Right cardiac atrium (tissue), 5 donors: ENCODE measurements at regions of chr1 and their contacts with region 1.

Region 1: GRCh38 chr1:85109475-85109874 is 61.2 kb upstream of the MCOLN3 start:
- DNase-seq: peak; percentile 47 to 76 (median 74)
- ATAC-seq: peak; percentile 92
- H3K4me3 ChIP-seq: no peak overlapping the region
- H3K27ac ChIP-seq: no peak overlapping the region
- H3K4me1 ChIP-seq: no peaks in the 10 kb centered on the region
- H3K27me3 ChIP-seq: no peaks in the 10 kb centered on the region

Region 2: DNA sequence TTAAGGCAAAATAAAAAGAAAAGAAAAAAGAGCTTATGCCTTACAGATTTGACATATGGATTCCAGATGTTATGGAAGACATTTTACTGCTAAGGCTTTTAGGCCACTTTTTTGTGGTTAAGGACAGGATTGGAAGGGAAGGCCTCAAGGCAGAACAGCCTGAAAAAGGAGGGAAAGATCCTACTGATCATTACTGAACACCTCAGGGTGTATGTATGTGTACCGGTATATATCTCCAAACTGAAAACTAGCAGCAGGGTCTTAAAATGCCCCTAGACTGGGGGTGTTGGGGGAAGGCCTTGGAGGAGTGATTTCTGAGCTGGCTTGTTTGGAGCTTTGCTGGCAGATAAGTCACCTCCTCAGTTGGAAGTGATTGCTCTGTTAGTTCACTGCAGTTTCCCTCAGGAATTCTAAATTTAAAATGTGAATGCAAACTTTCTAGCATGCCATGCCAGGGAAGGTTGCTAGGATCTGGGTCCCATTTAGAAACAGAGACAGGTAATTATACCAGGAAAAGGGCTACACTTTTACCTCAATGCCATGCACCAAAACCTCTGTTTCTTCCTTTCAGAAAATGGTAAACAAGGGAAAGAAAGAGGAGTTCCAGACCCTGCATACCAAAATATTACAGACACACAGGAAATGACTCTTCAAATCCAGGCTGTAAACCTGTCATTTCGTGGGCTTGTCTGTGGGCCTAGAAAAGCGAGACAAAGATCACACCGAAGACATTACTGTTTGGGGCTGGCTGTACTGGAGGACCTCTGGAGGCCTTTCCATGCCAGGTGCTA is 135.0 kb after region 1 on chr1:
- intact Hi-C with region 1: loop called in 1 of 4 experiments (anchors 5 kb)
- DNase-seq: no peak
- ATAC-seq: no peak
- H3K4me3 ChIP-seq: no peak overlapping the region
- H3K27ac ChIP-seq: no peak overlapping the region
- H3K4me1 ChIP-seq: no peaks in the 10 kb centered on the region
- H3K27me3 ChIP-seq: no peaks in the 10 kb centered on the region

Region 3: DNA sequence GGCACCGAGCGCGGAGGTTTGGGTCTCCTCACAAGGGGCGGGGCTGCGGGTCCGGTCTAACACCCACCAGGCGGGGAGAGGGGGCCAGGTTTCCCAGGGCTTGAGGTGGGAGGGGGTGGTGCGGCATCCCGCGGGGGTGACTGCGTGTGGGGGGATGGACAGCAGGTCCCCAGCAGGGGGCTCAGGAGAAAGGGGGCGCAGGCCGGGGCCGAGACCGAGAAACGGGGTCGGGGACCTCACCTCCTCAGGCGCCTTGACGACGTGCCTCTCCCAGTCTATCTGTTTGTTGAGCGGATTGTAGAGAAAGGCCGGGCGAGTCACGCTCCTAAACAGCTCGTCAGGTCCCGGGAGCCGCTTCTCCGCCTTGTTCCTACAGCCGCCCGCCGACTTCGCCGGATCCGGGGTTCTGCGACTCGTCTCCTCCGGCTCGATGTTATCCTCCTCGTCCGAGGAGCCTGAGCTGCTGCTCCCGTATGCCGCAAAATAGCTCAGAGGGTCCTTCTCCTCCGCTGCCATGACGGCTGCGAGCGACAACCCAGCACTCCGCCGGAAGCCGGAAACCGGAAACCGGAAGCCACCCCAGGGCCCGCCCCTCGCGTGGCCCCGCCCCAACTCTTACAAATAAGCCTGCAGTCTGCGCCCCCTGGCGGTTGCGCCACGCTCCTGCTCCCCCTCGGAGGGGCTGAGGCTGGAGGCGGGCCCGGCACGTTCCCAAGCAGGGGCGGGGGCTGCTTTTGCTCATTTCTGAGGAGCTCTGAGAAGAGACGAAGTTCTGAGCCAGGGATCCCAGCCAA is 149.8 kb after region 1 on chr1 and contains the start of gene C1orf52:
- intact Hi-C with region 1: loop called in 3 of 4 experiments (anchors 2 to 5 kb)
- DNase-seq: peak; percentile 96 to 99 (median 99)
- ATAC-seq: peak; percentile 97
- H3K4me3 ChIP-seq: peak within 1 kb of the TSS; percentile 96
- H3K27ac ChIP-seq: peak within 1 kb of the TSS; percentile 89
- H3K4me1 ChIP-seq: no peaks in the 10 kb centered on the region
- H3K27me3 ChIP-seq: no peaks in the 10 kb centered on the region
- total RNA-seq, gene C1orf52: 15.8 to 20.1 (median 17.9) TPM